ENCODE measurements at regions of chr6 and their contacts with region 1.

Region 1: GRCh38 chr6:137094411-137095008 is 49.7 kb upstream of the IL20RA start:
- DNase-seq: no peak
- ATAC-seq: peak; percentile 67

Region 2: GRCh38 chr6:136989571-136990241 is 104.8 kb before region 1 on chr6:
- intact Hi-C with region 1: no loop called
- DNase-seq: peak; percentile 76
- ATAC-seq: peak; percentile 92

Region 3: GRCh38 chr6:137148306-137149034 is 54.0 kb after region 1 on chr6:
- intact Hi-C with region 1: no loop called
- DNase-seq: no peak
- ATAC-seq: no peak

Region 4: GRCh38 chr6:137160763-137161162 is 66.3 kb after region 1 on chr6:
- intact Hi-C with region 1: loop called (anchors 5 kb)
- DNase-seq: no peak
- ATAC-seq: no peak

Region 5: DNA sequence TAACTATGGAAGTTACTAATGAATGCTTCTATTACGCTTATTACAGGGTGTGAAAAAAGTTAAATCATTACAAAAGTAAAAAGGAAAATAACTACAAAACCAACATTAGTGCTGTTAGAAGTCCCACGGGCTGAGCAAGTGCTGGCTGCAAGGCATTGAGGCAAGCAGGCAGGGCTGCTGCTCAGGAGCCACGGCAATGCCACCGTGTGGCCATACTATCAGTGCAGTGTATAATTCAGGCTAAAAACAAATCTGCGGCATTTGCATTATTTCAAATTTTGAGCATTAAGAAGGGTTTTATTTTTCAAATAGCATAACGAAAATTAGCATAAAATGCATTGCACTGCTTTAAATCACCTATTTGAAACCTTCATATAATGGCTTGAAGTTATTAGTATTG is 107.6 kb after region 1 on chr6:
- intact Hi-C with region 1: loop called (anchors 5 kb)
- DNase-seq: no peak
- ATAC-seq: peak; percentile 80

Region 6: GRCh38 chr6:137271245-137272183 is 177.0 kb after region 1 on chr6:
- intact Hi-C with region 1: loop called (anchors 2 kb)
- DNase-seq: no peak
- ATAC-seq: peak; percentile 74

Region 7: DNA sequence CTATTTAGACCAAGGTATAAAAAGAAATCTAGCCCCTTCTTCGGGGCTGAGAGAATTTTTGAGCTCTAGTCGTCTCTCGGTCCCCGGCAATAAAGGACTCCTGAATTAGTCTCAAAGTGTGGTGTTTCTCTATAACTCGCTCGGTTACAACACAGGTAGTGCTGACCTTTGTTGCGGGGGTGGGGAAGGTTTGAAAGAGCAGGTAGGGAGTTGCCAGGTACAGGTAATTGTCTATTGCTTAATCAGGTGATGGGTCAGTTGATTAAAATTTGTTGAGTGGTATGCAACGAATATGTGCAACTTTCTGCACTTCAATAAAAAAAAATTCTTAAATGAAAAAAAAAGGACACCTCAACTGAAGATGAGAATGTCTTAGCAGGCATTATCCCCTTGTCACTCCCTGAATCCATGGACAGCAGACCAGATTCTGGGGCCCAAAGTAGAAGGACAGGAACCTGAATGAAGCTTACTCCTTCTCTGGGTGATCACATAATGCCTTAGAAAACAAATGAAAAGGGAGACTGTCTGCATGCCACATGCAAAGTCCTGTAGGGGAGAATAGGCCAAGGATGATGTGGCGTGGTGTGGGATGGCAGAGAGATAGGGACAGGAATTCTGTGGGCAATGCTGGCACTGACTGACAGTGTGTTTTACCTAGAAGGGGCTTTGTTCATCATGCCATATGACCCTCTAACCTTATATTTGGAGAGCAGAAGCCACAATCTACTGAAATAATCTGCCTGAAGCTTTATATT is 557.3 kb after region 1 on chr6:
- intact Hi-C with region 1: no loop called
- DNase-seq: no peak
- ATAC-seq: no peak

Measured in Right ventricle myocardium inferior (tissue), 1 donor.